Dorsolateral prefrontal cortex (tissue), 120 donors: ENCODE measurements at regions of chr4 and their contacts with region 1.

Region 1: DNA sequence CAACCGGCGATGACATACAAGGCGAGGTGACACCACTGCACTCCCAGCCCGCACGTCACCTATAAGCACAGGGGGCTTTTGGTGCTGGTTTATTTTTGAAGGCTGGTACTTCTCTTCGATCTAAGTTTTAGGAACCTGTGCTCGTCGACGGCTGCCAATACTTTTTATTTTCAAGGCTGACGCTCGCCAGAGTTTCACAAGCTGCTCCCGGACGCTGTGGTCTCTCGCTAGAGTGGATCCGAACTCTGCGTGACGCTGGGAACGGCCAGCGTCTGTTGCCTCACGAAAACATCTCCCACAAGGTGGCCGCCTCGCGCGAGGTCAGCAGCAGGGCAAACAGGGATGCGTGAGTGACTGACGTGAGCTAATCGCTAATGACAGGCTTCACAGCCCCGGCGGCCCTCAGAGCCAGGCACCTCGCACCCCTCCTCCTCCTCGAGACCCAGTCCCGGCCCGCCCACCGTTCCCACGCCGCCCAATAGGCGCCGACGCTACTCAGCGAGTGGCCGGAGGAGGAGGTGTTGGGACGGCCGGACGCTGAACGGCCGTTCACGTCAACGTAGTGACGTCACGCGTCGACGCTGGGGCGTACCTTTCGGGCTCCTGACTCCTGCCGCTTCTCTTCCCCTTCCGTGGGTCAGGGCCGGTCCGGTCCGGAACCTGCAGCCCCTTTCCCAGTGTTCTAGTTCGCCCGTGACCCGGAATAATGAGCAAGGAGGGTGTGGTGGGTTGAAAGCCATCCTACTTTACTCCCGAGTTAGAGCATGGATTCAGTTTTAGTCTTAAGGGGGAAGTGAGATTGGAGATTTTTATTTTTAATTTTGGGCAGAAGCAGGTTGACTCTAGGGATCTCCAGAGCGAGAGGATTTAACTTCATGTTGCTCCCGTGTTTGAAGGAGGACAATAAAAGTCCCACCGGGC is at the start of gene CLCN3:
- DNase-seq: peak; percentile 90 to 99 (median 98)
- H3K4me3 ChIP-seq: peak within 1 kb of the TSS; percentile 61 to 95 (median 85)
- H3K27ac ChIP-seq: peak within 1 kb of the TSS; percentile 75 to 99 (median 96)
- H3K27me3 ChIP-seq: no peaks in the 10 kb centered on the region
- CTCF ChIP-seq: peak in 41 of 56 donors; percentile 8 to 62 (median 41)
- total RNA-seq, gene CLCN3: 60.7 to 119 (median 90.2) TPM

Region 2: DNA sequence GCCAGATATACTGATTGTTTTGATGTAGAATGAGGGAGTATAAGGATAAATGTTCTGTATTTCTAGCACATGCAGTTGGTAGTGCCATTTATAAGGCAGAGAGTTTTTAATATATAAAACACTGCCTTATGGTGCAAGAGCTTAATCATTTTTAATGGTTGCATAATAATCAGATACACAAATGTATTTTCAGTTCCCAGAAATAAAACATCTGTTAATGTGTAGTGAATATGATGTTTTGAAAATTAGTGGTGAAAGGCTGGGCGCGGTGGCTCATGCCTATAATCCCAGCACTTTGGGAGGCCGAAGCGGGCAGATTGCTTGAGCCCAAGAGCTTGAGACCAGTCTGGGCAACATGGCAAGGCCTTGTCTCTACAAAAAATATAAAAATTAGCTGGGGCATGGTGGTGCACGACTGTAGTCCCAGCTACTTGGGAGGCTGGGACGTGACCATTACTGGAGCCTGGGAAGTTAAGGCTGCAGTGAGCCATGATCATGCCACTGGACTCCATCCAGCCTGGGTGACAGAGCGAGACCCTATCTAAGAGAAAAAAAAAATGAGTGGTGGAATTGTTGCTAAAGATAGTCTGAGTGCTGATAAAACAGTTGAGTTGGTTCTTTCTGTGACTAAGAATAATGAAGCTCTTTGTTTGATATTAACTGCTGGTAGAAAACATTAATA is 29.5 kb after region 1 on chr4:
- intact Hi-C with region 1: no loop called
- DNase-seq: no peak
- H3K4me3 ChIP-seq: no peak overlapping the region
- H3K27ac ChIP-seq: peak overlapping the region in 21 of 59 donors; percentile 1 to 40 (median 16)
- H3K27me3 ChIP-seq: no peaks in the 10 kb centered on the region
- CTCF ChIP-seq: no peak

Region 3: DNA sequence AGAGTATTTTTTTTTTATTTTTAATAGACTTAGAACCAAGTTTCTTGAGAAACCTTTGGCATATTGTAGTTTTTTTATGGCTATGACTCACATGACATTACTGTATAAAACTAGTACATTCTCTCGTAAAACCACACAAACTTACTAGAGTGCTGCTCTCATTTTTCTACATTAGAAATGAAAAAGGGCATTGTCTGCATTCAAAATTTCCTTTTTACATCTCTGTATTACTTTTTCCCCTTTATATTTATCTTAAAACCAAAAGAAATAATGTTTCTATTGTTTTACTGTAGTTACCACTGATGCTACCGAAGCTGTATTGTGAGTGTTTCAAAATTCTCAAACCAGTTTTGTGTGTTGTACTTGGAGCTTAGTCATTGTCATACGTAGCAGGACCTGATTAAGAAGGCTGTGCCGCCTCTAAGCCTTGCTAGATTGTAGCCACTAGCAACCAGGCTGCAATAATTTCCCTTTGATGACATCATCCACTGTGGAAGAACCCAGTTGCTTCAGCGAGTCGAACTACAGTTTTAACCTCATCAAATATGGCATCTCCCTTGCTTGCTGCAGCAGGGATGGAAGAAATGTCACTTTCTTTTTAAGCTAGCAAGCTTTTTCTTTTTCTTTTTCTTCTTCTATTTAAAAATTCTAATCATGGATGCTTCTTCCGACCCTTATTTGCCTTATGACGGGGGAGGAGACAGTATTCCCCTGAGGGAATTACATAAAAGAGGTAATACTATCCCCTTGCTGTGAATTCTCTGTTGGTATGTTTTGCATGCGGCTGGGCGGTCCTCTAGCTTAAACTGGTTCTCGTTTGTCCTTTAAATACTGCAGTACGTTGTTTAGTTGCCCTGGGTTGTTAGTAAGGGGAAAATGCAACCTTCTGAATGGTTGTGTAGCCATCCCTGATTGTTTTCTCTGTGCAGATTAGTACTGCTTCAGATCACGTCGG is 39.8 kb after region 1 on chr4:
- intact Hi-C with region 1: loop called in 1 of 2 experiments (anchors 2 kb)
- DNase-seq: peak in 8 of 10 donors; percentile 53 to 82 (median 62)
- H3K4me3 ChIP-seq: peak overlapping the region; percentile 14 to 81 (median 66)
- H3K27ac ChIP-seq: peak overlapping the region; percentile 51 to 95 (median 87)
- H3K27me3 ChIP-seq: no peaks in the 10 kb centered on the region
- CTCF ChIP-seq: peak in 9 of 56 donors; percentile 4 to 45 (median 11)

Region 4: GRCh38 chr4:169741569-169741968 is 121.3 kb after region 1 on chr4:
- intact Hi-C with region 1: no loop called
- DNase-seq: no peak
- H3K4me3 ChIP-seq: no peak overlapping the region
- H3K27ac ChIP-seq: peak overlapping the region in 1 of 59 donors; percentile 10
- H3K27me3 ChIP-seq: no peaks in the 10 kb centered on the region
- CTCF ChIP-seq: no peak

Region 5: GRCh38 chr4:169774466-169775445 is 154.5 kb after region 1 on chr4:
- intact Hi-C with region 1: no loop called
- DNase-seq: no peak
- H3K4me3 ChIP-seq: peak overlapping the region in 34 of 59 donors; percentile 1 to 50 (median 24)
- H3K27ac ChIP-seq: peak overlapping the region in 36 of 59 donors; percentile 2 to 91 (median 71)
- H3K27me3 ChIP-seq: peaks cover 0 to 14% (median 5%) of the 10 kb centered on the region in 45 donors
- CTCF ChIP-seq: peak in 27 of 56 donors; percentile 9 to 55 (median 28)

Region 6: GRCh38 chr4:169791527-169792156 is 171.4 kb after region 1 on chr4:
- intact Hi-C with region 1: loop called in 1 of 2 experiments (anchors 10 kb)
- DNase-seq: peak in 9 of 10 donors; percentile 21 to 75 (median 67)
- H3K4me3 ChIP-seq: peak overlapping the region; percentile 8 to 71 (median 50)
- H3K27ac ChIP-seq: peak overlapping the region in 52 of 59 donors; percentile 2 to 82 (median 55)
- H3K27me3 ChIP-seq: no peaks in the 10 kb centered on the region
- CTCF ChIP-seq: peak; percentile 49 to 81 (median 70)

Region 7: DNA sequence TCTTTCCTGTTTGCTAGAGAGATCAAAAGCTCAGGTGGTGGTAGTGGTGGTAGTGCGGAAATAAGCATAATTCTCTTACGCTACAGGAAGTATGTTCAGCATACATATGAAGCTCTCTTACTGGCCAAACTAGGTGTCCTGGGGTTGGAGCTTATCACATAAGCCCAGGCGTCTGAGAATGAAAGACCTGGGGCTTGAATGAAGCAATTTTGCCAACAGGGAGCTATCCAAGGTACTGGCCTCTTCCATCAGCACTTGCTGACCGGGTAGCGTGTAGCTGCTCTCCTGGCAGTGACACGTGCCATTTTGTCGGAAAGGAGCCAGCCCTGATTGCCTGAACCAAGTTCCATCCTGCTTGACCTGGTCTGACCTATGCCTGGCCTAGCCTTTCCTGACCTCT is 203.5 kb after region 1 on chr4:
- intact Hi-C with region 1: no loop called
- DNase-seq: no peak
- H3K4me3 ChIP-seq: no peak overlapping the region
- H3K27ac ChIP-seq: no peak overlapping the region
- H3K27me3 ChIP-seq: no peaks in the 10 kb centered on the region
- CTCF ChIP-seq: no peak

Region 8: DNA sequence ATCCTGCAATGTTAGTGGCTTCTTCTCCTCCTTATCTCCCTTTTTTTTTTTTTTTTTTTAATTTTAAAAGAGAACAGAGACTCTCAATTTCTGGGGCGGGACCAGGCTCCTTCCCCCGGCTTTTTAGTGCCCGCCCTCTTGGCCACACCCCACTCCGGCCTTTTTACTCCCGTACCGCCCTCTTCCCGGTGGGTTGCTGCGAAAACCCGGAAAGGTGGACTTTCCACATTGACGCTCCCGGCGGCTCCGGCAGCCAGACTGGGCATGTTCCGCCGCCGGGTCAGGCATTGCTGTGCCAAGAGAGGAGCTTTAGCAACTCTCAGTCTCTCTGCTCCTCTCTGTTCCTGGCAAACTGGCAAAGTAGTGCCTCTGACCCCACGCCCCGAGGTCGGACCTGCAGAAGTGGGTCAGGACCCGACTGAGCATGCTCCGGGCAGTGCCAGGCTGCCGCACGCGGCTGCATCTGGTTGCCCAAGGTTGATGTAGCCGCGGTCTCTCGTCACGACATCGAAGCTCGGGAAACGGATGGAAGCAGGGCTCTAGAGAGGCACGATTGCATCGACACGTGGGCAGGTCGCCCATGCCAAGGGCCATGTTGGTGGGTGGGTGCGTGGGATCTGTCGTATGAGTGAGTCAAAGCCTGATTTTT is 407.1 kb after region 1 on chr4:
- intact Hi-C with region 1: loop called in 1 of 2 experiments (anchors 2 kb)
- DNase-seq: peak; percentile 86 to 94 (median 91)
- H3K4me3 ChIP-seq: peak overlapping the region; percentile 66 to 96 (median 88)
- H3K27ac ChIP-seq: peak overlapping the region; percentile 60 to 99 (median 97)
- H3K27me3 ChIP-seq: no peaks in the 10 kb centered on the region
- CTCF ChIP-seq: peak in 22 of 56 donors; percentile 8 to 55 (median 33)

Region 9: DNA sequence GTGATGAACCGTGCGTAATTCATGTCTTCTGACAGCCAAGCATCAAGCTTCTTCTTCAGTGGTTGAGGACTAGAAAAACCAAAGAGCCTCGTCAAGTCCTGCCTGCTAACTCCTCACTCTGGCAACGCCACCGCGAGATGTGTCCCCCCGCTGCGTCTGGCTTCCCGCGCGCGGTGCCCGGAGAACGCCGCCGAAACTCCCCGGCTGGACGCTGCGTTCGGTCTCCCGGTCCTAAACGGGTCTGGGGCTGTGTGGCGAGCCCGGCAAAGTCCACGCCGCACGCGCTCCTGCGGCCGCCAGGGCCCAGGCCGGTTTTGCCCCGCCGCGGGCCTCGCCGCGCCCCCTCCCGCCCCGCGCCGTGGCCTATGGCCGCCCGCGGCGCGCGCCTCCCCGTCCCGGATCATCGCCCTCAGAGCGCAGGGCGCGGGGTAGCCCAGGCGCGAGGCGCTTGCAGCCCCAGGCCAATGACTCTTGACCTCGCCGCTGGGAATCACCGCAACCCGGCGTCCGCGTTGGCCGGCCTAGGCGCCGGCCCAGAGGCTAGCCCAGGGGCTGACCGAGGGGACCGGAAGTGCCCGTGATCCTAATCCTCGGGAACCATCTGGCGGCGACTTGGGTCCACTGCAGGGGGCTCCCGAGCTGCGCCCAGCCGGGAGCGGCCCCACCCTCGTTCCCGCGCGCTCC is 469.6 kb after region 1 on chr4 and contains the start of gene AADAT:
- intact Hi-C with region 1: loop called in 1 of 2 experiments (anchors 10 kb)
- DNase-seq: peak; percentile 27 to 89 (median 78)
- H3K4me3 ChIP-seq: peak within 1 kb of the TSS; percentile 51 to 84 (median 73)
- H3K27ac ChIP-seq: peak within 1 kb of the TSS in 57 of 59 donors; percentile 10 to 91 (median 79)
- H3K27me3 ChIP-seq: no peaks in the 10 kb centered on the region
- CTCF ChIP-seq: peak; percentile 38 to 93 (median 78)
- total RNA-seq, gene AADAT: 11.1 to 25.5 (median 16.1) TPM